PC-3 (cell line): ENCODE measurements at regions of chr19 and their contacts with region 1.

Region 1: GRCh38 chr19:44845612-44846454 is at the start of gene NECTIN2:
- DNase-seq: peak; percentile 96
- ATAC-seq: peak; percentile 47
- H3K4me3 ChIP-seq: peak within 1 kb of the TSS; percentile 84
- H3K27ac ChIP-seq: peak within 1 kb of the TSS; percentile 36
- H3K4me1 ChIP-seq: peaks cover 14% of the 10 kb centered on the region
- H3K27me3 ChIP-seq: no peaks in the 10 kb centered on the region
- CTCF ChIP-seq: peak; percentile 78
- total RNA-seq, gene NECTIN2: 61.0 and 71.6 TPM in 2 replicates

Region 2: DNA sequence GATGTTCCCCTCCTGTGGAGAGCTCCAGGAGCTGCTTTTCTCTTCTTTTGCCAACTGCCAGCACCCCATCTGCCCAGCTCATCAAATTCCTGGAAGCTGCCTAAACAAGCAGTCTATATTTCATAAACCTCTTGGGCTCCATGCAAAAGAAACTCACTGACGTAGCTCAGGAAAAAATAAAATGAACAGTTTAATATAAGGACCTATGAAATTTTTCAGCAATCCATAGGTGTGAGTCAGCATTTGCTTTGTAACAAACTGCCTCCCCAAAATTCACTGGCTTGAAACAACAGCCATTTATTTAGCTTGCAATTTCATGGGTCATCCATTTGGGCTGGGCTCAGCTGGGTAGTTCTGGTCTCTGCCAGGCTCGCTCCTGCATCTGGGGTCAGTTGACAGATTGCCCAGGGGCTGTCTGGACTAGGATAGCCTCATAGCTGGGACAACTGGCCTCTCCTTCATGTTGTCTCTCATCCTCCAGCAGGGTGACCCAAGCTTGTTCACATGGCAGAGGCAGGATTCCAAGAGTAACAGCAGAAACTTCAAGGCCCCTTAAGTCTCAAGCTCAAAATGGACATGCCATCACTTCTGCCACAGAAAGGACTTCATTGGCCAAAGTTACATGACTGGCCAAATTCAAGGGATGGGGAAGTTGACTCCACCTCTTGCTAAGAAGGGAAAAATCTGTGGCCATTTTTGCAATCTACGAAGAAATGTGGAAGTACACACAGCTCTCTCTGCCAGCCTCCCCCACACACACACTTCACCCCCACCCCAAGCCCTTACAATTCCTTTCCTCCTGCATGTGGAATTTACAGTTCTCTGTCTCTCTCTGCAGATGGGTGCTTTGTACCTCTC is 210.0 kb before region 1 on chr19:
- CTCF ChIA-PET with region 1: no interaction called
- POLR2A ChIA-PET with region 1: interaction called, 29 read pairs
- intact Hi-C with region 1: no loop called
- DNase-seq: peak; percentile 64
- ATAC-seq: peak; percentile 64
- H3K4me3 ChIP-seq: no peak overlapping the region
- H3K27ac ChIP-seq: peak overlapping the region; percentile 58
- H3K4me1 ChIP-seq: peaks cover 42% of the 10 kb centered on the region
- H3K27me3 ChIP-seq: no peaks in the 10 kb centered on the region
- CTCF ChIP-seq: no peak

Region 3: GRCh38 chr19:44729516-44730033 is 116.3 kb before region 1 on chr19:
- CTCF ChIA-PET with region 1: no interaction called
- POLR2A ChIA-PET with region 1: interaction called, 19 read pairs
- intact Hi-C with region 1: no loop called
- DNase-seq: no peak
- ATAC-seq: no peak
- H3K4me3 ChIP-seq: no peak overlapping the region
- H3K27ac ChIP-seq: no peak overlapping the region
- H3K4me1 ChIP-seq: peaks cover 11% of the 10 kb centered on the region
- H3K27me3 ChIP-seq: no peaks in the 10 kb centered on the region
- CTCF ChIP-seq: no peak

Region 4: GRCh38 chr19:44770550-44771257 is 75.1 kb before region 1 on chr19:
- CTCF ChIA-PET with region 1: interaction called, 4 read pairs
- POLR2A ChIA-PET with region 1: interaction called, 25 read pairs
- intact Hi-C with region 1: loop called (anchors 5 kb)
- DNase-seq: peak; percentile 97
- ATAC-seq: peak; percentile 94
- H3K4me3 ChIP-seq: peak overlapping the region; percentile 37; the same call in 1 of the 2 replicates
- H3K27ac ChIP-seq: no peak overlapping the region
- H3K4me1 ChIP-seq: peaks cover 28% of the 10 kb centered on the region
- H3K27me3 ChIP-seq: no peaks in the 10 kb centered on the region
- CTCF ChIP-seq: peak; percentile 76

Region 5: GRCh38 chr19:44785246-44785645 is 60.6 kb before region 1 on chr19:
- CTCF ChIA-PET with region 1: no interaction called
- POLR2A ChIA-PET with region 1: interaction called, 22 read pairs
- intact Hi-C with region 1: loop called (anchors 2 kb)
- DNase-seq: no peak
- ATAC-seq: no peak
- H3K4me3 ChIP-seq: no peak overlapping the region
- H3K27ac ChIP-seq: no peak overlapping the region
- H3K4me1 ChIP-seq: no peaks in the 10 kb centered on the region
- H3K27me3 ChIP-seq: no peaks in the 10 kb centered on the region
- CTCF ChIP-seq: no peak

Region 6: GRCh38 chr19:44890366-44891015 is 44.7 kb after region 1 on chr19:
- CTCF ChIA-PET with region 1: no interaction called
- POLR2A ChIA-PET with region 1: interaction called, 5 read pairs
- intact Hi-C with region 1: loop called (anchors 5 kb)
- DNase-seq: peak; percentile 99
- ATAC-seq: peak; percentile 87
- H3K4me3 ChIP-seq: peak overlapping the region; percentile 66
- H3K27ac ChIP-seq: peak overlapping the region; percentile 86
- H3K4me1 ChIP-seq: peaks cover 16% of the 10 kb centered on the region
- H3K27me3 ChIP-seq: no peaks in the 10 kb centered on the region
- CTCF ChIP-seq: no peak